HepG2 (cell line): ENCODE measurements at regions of chr7 and their contacts with region 1.

Region 1: DNA sequence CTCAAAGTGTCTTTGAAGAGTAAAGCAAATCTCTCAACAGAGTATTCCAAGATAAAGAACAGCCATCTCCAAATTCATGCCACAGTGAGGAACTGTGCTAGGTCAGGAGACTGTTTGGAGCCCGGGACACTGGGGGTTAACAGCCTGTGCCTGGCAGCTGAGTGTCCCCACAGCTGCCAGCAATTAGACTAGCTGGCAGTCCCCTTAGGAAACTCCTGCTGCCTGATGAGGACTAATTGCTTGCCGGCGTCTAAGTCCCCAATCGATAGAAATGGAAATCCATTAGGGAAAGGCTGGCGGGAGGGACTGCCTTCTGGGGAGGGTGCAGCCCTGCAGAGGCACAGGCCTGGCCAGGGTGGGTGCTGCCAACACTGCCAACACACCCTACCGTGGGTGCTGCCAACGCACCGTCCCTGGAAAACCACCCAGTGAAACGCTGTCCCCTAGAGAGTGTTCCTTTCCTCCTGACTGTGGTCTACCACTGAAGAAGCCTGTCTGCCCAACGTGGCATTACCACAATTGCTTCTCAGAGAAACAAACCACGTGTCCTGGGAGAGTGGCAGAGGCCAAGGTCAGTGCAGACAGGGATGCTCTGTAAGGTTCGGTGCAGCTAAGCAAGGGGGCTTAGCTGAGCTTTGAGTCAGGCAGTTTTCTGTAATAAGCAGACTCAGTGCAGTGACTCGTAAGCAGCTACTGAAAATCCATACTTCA is 60.8 kb downstream of the XRCC2 start:
- DNase-seq: peak; percentile 66
- ATAC-seq: peak; percentile 85
- H3K4me3 ChIP-seq: peak overlapping the region in 1 of 3 experiments; percentile 46; a peak in 2 of 6 replicates
- H3K27ac ChIP-seq: no peak overlapping the region
- H3K4me1 ChIP-seq: peaks cover 15% of the 10 kb centered on the region
- H3K27me3 ChIP-seq: no peaks in the 10 kb centered on the region
- CTCF ChIP-seq: 0 out of 2 replicates have a peak, but pooled peaks have one; percentile 4
- EP300 ChIP-seq: no peak
- POLR2A ChIP-seq: no peak
- RAD21 ChIP-seq: no peak

Region 2: GRCh38 chr7:152556013-152556755 is 59.0 kb before region 1 on chr7:
- CTCF ChIA-PET with region 1: no interaction called
- POLR2A ChIA-PET with region 1: no interaction called
- in situ Hi-C with region 1: no loop called
- intact Hi-C with region 1: no loop called
- DNase-seq: no peak
- ATAC-seq: peak; percentile 79
- H3K4me3 ChIP-seq: peak overlapping the region in 1 of 3 experiments; percentile 15; a peak in 1 of 6 replicates
- H3K27ac ChIP-seq: no peak overlapping the region
- H3K4me1 ChIP-seq: peaks cover 21% of the 10 kb centered on the region
- H3K27me3 ChIP-seq: no peaks in the 10 kb centered on the region
- CTCF ChIP-seq: no peak; the same call in 1 of the 2 replicates
- EP300 ChIP-seq: no peak
- POLR2A ChIP-seq: no peak
- RAD21 ChIP-seq: no peak

Region 3: DNA sequence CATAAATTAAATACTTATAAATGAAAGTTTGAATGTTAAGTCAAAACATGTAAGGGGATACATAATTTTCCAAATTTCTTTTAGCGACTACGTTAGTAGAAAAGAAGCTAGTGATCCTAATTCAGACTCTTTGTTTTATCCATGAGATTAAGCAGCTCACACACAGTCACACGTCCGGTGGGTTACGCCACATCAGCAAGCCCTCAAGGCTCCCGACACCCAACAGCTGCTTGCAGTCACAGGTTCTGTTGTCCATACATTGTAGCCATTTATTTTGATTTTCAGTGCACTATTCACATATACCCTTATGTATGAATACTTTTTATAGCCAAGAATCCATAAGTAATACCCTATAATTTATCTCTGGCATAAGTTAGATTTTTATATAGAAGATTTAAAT is 21.3 kb after region 1 on chr7:
- CTCF ChIA-PET with region 1: no interaction called
- POLR2A ChIA-PET with region 1: no interaction called
- in situ Hi-C with region 1: no loop called
- intact Hi-C with region 1: no loop called
- DNase-seq: no peak
- ATAC-seq: no peak
- H3K4me3 ChIP-seq: no peak overlapping the region
- H3K27ac ChIP-seq: no peak overlapping the region
- H3K4me1 ChIP-seq: peaks cover 15% of the 10 kb centered on the region
- H3K27me3 ChIP-seq: no peaks in the 10 kb centered on the region; a peak in 2 of 5 replicates
- CTCF ChIP-seq: no peak
- EP300 ChIP-seq: no peak
- POLR2A ChIP-seq: no peak
- RAD21 ChIP-seq: no peak

Region 4: GRCh38 chr7:152709287-152710152 is 94.3 kb after region 1 on chr7:
- CTCF ChIA-PET with region 1: no interaction called
- POLR2A ChIA-PET with region 1: no interaction called
- in situ Hi-C with region 1: no loop called
- intact Hi-C with region 1: no loop called
- DNase-seq: no peak
- ATAC-seq: no peak
- H3K4me3 ChIP-seq: no peak overlapping the region
- H3K27ac ChIP-seq: no peak overlapping the region
- H3K4me1 ChIP-seq: peaks cover 12% of the 10 kb centered on the region
- H3K27me3 ChIP-seq: no peaks in the 10 kb centered on the region
- CTCF ChIP-seq: no peak
- EP300 ChIP-seq: no peak
- POLR2A ChIP-seq: no peak
- RAD21 ChIP-seq: no peak

Region 5: GRCh38 chr7:153158204-153158603 is 543.0 kb after region 1 on chr7:
- CTCF ChIA-PET with region 1: no interaction called
- POLR2A ChIA-PET with region 1: no interaction called
- in situ Hi-C with region 1: no loop called
- intact Hi-C with region 1: loop called (anchors 10 kb)
- DNase-seq: no peak
- ATAC-seq: no peak
- H3K4me3 ChIP-seq: no peak overlapping the region
- H3K27ac ChIP-seq: no peak overlapping the region
- H3K4me1 ChIP-seq: no peaks in the 10 kb centered on the region
- H3K27me3 ChIP-seq: 0 out of 5 replicates have a peak, but pooled peaks cover 0 to 3% of the 10 kb centered on the region in 2 experiments
- CTCF ChIP-seq: no peak
- EP300 ChIP-seq: no peak
- POLR2A ChIP-seq: no peak
- RAD21 ChIP-seq: no peak